Left ventricle myocardium superior (tissue), 1 donor: ENCODE measurements at regions of chr14 and their contacts with region 1.

Region 1: DNA sequence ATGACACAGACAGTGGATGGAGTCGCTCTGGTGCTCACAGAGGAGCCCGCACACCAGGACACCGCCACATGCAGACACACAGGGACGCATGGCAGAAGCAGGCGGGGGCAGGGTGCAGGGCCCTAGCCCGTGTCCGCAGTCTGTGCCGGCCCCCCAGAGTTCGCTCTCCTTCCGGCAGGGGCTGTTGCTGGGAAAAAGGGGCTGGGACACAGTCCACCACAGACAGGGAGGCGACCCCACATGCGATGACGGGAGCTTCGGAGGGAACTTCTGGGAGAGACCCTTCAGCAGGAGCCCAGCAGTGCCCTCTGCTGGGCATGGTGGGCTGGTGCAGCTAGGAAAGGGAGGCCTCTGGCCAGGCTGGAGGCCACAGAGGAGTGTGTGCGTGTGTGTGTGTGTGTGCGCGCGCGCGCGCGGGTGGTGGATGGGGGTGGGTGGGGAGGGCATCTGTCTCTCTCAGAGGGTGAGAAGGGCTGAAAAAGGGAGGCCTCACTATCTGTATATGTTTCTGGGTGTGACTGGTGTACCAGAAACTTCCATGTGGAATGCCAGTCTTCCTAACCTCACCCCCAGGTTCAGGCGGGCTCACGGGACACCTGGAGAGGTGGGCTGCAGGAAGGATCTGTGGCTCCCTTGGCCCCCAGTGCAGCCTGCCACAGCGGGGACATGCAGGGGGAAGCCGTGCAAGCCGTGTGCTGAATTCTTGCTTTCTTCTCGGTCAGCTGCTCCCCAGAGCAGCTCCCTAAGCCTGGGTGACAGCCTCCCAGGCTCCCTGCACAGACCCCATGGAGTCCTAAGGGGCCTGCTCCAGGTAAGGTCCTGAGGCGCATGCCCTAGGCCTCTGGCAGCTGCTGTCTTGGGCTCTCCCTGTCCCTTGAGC is 60.7 kb downstream of the PLEKHG3 start:
- DNase-seq: peak; percentile 81
- ATAC-seq: peak; percentile 63

Region 2: DNA sequence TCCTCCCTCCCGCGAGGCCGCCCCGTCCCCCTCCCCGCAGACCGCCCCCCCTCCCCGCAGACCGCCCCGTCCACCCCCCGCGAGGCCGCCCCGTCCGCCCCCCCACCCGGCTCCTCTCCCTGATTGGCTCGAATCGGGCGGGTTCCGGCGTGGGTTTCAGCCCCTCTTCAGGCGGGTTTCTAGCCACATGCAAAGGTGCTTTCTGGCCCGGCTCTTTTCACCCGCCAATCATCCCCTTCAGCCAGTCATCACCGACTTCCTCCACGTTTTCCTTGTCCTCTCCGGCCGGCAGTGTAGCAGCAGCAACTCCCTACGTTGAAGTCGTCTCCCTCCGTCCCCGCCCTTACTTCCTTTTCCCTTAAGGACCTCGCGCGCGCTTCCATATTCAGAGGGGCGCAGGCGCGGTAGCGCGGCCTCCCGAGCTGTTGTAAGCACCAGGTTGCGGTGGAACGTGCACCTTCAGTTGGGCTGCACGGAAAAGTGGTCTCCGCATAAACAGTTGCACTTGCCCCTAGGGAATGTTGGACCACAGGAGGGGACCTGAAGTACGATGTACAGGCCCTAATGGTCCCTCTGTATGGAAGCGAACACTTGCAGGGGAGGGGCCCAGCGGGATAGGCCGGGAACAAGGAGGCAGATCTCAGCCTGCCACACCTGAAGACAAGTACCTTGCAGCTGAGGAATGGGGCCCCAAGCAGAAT is 426.1 kb before region 1 on chr14:
- intact Hi-C with region 1: no loop called
- DNase-seq: peak; percentile 92
- ATAC-seq: peak; percentile 95

Region 3: DNA sequence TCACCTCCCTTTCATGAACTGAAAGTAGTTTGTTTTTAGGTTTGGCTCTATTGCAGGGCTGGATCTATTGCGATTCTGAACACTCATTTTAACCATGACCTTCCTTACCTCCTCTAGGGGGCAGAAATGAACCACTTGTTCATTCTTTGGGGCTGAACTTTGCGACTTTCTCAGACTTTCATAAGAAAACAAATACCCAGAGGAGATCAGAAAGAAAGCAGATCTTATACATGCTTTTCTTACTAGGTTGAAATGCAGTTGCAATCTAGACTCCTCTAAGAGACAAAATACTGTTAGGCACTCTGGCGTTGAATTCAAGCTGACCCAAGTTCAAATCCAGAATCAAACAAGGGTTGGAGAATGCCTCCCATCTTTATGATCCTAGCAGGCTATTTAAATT is 93.3 kb before region 1 on chr14:
- intact Hi-C with region 1: loop called (anchors 5 kb)
- DNase-seq: no peak
- ATAC-seq: peak; percentile 70

Region 4: GRCh38 chr14:64698903-64699302 is 66.0 kb before region 1 on chr14:
- intact Hi-C with region 1: no loop called
- DNase-seq: no peak
- ATAC-seq: peak; percentile 10